ENCODE measurements at regions of chr10 and their contacts with region 1.

Region 1: GRCh38 chr10:14837757-14838581 is at the starts of genes CDNF, HSPA14 and MSANTD7:
- DNase-seq: peak; percentile 100
- H3K4me3 ChIP-seq: peak within 1 kb of the TSS; percentile 91
- H3K4me3 Mint-ChIP-seq: peak within 1 kb of the TSS; percentile 70
- H3K27ac Mint-ChIP-seq: peak within 1 kb of the TSS; percentile 91
- H3K4me1 ChIP-seq: no peaks in the 10 kb centered on the region; the same call in 1 of the 2 replicates
- H3K4me1 Mint-ChIP-seq: peaks cover 15% of the 10 kb centered on the region
- H3K27me3 ChIP-seq: no peaks in the 10 kb centered on the region
- H3K27me3 Mint-ChIP-seq: no peaks in the 10 kb centered on the region
- CTCF ChIP-seq: no peak
- total RNA-seq, gene CDNF: 3.4 and 3.9 TPM in 2 replicates
- total RNA-seq, gene HSPA14: 36.9 and 39.3 TPM in 2 replicates
- total RNA-seq, gene MSANTD7: 30.0 and 32.8 TPM in 2 replicates

Region 2: GRCh38 chr10:14466257-14466656 is 371.7 kb before region 1 on chr10:
- CTCF ChIA-PET with region 1: no interaction called
- POLR2A ChIA-PET with region 1: no interaction called
- intact Hi-C with region 1: no loop called
- DNase-seq: no peak
- H3K4me3 ChIP-seq: no peak overlapping the region
- H3K4me3 Mint-ChIP-seq: no peak overlapping the region
- H3K27ac Mint-ChIP-seq: no peak overlapping the region
- H3K4me1 ChIP-seq: no peaks in the 10 kb centered on the region
- H3K4me1 Mint-ChIP-seq: no peaks in the 10 kb centered on the region
- H3K27me3 ChIP-seq: no peaks in the 10 kb centered on the region
- H3K27me3 Mint-ChIP-seq: peaks cover 4% of the 10 kb centered on the region
- CTCF ChIP-seq: no peak

Region 3: DNA sequence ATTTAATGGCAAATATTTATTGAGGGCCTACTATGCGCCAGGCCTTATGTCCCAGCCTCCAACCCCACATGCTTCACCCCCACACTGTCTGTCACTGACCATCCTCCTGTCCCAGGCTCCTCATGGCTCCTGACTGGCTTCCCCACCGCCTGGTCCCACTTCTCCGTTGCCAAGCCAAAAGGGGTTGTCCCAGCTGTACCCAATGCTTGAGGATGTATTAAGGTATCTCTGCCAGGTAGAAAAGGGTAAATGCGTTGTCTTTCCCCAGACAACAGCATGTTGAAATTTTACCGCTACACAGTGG is 338.4 kb before region 1 on chr10:
- CTCF ChIA-PET with region 1: interaction called, 3 read pairs
- POLR2A ChIA-PET with region 1: no interaction called
- intact Hi-C with region 1: loop called (anchors 1 kb)
- DNase-seq: no peak
- H3K4me3 ChIP-seq: no peak overlapping the region
- H3K4me3 Mint-ChIP-seq: no peak overlapping the region
- H3K27ac Mint-ChIP-seq: no peak overlapping the region
- H3K4me1 ChIP-seq: no peaks in the 10 kb centered on the region; the same call in 1 of the 2 replicates
- H3K4me1 Mint-ChIP-seq: peaks cover 15% of the 10 kb centered on the region
- H3K27me3 ChIP-seq: no peaks in the 10 kb centered on the region
- H3K27me3 Mint-ChIP-seq: no peaks in the 10 kb centered on the region
- CTCF ChIP-seq: no peak

Region 4: GRCh38 chr10:14801723-14802122 is 36.2 kb before region 1 on chr10:
- CTCF ChIA-PET with region 1: interaction called, 3 read pairs
- POLR2A ChIA-PET with region 1: no interaction called
- intact Hi-C with region 1: loop called (anchors 1 kb)
- DNase-seq: peak; percentile 59 to 67
- H3K4me3 ChIP-seq: no peak overlapping the region
- H3K4me3 Mint-ChIP-seq: no peak overlapping the region
- H3K27ac Mint-ChIP-seq: no peak overlapping the region
- H3K4me1 ChIP-seq: peaks cover 8% of the 10 kb centered on the region; the same call in 1 of the 2 replicates
- H3K4me1 Mint-ChIP-seq: peaks cover 9% of the 10 kb centered on the region
- H3K27me3 ChIP-seq: no peaks in the 10 kb centered on the region
- H3K27me3 Mint-ChIP-seq: no peaks in the 10 kb centered on the region
- CTCF ChIP-seq: peak; percentile 38 to 54

Region 5: GRCh38 chr10:14959276-14960057 is 121.5 kb after region 1 on chr10 and contains the start of gene MEIG1:
- CTCF ChIA-PET with region 1: interaction called, 4 read pairs
- POLR2A ChIA-PET with region 1: interaction called, 23 read pairs
- intact Hi-C with region 1: loop called (anchors 2 kb)
- DNase-seq: peak; percentile 98 to 99
- H3K4me3 ChIP-seq: peak within 1 kb of the TSS; percentile 62
- H3K4me3 Mint-ChIP-seq: peak within 1 kb of the TSS; percentile 99
- H3K27ac Mint-ChIP-seq: peak within 1 kb of the TSS; percentile 100
- H3K4me1 ChIP-seq: peaks cover 9% of the 10 kb centered on the region
- H3K4me1 Mint-ChIP-seq: peaks cover 6% of the 10 kb centered on the region
- H3K27me3 ChIP-seq: no peaks in the 10 kb centered on the region
- H3K27me3 Mint-ChIP-seq: no peaks in the 10 kb centered on the region
- CTCF ChIP-seq: no peak
- total RNA-seq, gene MEIG1: not detected in 2 replicates

Measured in Caco-2 (cell line).